ENCODE measurements at regions of chr17 and their contacts with region 1.

Region 1: GRCh38 chr17:66301797-66302741 is at the start of gene PRKCA:
- DNase-seq: peak; percentile 77 to 90
- ATAC-seq: peak; percentile 89
- H3K4me3 ChIP-seq: peak within 1 kb of the TSS; percentile 90 to 94
- H3K27ac ChIP-seq: peak within 1 kb of the TSS in 1 of 2 donors; percentile 55
- H3K4me1 ChIP-seq: no peaks in the 10 kb centered on the region
- H3K27me3 ChIP-seq: no peaks in the 10 kb centered on the region
- total RNA-seq, gene PRKCA: 11.9 to 15.4 TPM

Region 2: GRCh38 chr17:66191593-66192382 is 110.3 kb before region 1 on chr17 and contains the start of gene CEP112:
- intact Hi-C with region 1: no loop called
- DNase-seq: peak; percentile 85 to 93
- ATAC-seq: peak; percentile 90
- H3K4me3 ChIP-seq: peak within 1 kb of the TSS; percentile 62 to 73
- H3K27ac ChIP-seq: peak within 1 kb of the TSS in 1 of 2 donors; percentile 30
- H3K4me1 ChIP-seq: peaks cover 0 to 2% of the 10 kb centered on the region in 2 donors
- H3K27me3 ChIP-seq: no peaks in the 10 kb centered on the region
- total RNA-seq, gene CEP112: 31.2 to 47.5 TPM

Region 3: DNA sequence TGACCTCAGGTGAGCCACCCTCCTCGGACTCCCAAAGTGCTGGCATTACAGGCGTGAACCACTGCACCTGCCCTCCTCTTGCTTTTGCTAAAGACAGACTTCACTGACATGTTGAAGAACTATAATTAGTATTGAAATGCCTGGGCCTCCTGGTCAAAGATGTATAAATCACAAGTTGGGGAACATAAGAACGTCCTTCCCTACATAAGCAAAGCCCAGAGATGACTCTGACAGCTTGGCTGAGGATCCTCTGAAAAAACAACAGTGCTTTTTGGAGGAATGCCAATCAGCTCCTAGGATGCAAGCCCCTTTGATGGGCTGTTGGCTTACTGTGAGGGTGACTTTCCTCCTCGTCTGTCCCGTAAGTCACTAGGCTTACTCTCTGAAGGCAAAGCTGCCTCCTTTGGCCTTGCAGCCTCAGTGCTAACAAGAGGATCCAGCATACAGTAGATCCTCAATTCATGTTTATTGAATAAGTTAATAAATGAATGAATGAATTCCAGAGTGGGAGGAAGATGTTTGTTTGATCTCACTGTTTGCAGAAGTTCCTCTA is 79.2 kb before region 1 on chr17:
- intact Hi-C with region 1: no loop called
- DNase-seq: no peak
- ATAC-seq: no peak
- H3K4me3 ChIP-seq: no peak overlapping the region
- H3K27ac ChIP-seq: no peak overlapping the region
- H3K4me1 ChIP-seq: no peaks in the 10 kb centered on the region
- H3K27me3 ChIP-seq: peaks cover 0 to 3% of the 10 kb centered on the region in 2 donors

Region 4: DNA sequence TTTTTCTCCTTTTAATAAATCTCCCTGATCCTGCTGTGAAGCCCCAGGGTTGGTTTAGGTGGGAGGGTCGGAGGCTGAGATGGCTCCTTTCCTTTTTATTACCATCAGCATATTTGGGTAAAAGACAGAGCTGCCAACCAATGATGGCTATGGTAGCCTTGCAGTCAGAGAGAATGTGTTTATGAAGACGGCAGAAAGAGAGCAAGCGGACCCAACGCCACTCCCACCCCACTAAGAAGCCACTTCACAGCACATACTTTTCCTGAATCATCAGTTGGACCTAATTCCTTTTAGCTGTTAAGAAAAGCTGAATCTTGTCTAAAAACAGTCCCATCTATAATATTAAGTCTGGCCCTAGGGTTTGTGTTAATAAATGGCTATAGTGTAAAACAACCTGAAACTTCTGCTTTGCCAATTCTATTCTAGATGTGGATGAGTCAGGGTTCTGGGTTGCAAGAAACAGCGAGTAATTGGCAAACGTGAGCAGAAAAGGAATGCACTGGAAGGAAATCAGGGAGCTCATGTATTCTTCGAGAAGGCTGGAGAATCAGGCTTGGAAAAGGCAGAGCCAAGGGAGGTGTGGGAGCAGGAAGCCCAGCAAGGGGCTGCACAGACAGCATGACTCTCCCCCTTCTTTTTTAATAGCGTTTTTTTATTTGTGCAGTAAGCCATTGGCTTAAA is 33.7 kb before region 1 on chr17:
- intact Hi-C with region 1: loop called in 1 of 2 experiments (anchors 5 kb)
- DNase-seq: no peak
- ATAC-seq: no peak
- H3K4me3 ChIP-seq: no peak overlapping the region
- H3K27ac ChIP-seq: no peak overlapping the region
- H3K4me1 ChIP-seq: peaks cover 0 to 3% of the 10 kb centered on the region in 2 donors
- H3K27me3 ChIP-seq: no peaks in the 10 kb centered on the region